ENCODE measurements at regions of chr1 and their contacts with region 1.

Region 1: DNA sequence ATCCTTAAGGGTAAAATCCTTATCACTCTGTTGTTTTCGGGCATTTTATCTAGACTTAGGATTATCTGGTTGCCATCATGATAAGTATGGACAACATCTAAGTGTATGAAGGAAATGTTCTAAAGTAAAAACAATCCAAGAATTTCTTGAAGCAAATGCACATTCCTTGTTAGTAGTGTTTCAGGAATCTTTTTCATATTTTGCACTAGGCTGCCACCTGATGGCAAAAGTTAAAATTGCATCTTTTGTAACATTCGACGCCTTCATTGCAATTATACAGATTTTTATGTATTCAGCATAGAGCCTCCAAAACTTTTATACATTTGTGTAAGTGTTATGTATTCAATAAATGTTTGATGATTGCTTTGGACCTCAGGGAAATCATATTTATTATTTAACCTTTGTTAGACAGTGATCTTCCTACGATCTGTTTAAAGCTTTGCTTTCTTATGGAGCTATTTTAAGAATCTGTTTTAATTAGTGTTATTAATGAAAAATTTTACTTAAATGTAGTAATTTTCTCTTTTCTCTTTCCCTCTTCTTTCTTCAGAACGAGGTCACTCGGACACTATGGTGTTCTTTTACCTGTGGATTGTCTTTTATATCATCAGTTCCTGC is 49.4 kb upstream of the KIAA1614 start:
- DNase-seq: peak; percentile 64
- ATAC-seq: no peak
- H3K4me3 ChIP-seq: no peak overlapping the region
- H3K4me3 Mint-ChIP-seq: no peak overlapping the region
- H3K27ac ChIP-seq: no peak overlapping the region
- H3K27ac Mint-ChIP-seq: no peak overlapping the region
- H3K4me1 ChIP-seq: no peaks in the 10 kb centered on the region
- H3K4me1 Mint-ChIP-seq: no peaks in the 10 kb centered on the region
- H3K27me3 ChIP-seq: no peaks in the 10 kb centered on the region
- H3K27me3 Mint-ChIP-seq: no peaks in the 10 kb centered on the region
- CTCF ChIP-seq: peak; percentile 90

Region 2: DNA sequence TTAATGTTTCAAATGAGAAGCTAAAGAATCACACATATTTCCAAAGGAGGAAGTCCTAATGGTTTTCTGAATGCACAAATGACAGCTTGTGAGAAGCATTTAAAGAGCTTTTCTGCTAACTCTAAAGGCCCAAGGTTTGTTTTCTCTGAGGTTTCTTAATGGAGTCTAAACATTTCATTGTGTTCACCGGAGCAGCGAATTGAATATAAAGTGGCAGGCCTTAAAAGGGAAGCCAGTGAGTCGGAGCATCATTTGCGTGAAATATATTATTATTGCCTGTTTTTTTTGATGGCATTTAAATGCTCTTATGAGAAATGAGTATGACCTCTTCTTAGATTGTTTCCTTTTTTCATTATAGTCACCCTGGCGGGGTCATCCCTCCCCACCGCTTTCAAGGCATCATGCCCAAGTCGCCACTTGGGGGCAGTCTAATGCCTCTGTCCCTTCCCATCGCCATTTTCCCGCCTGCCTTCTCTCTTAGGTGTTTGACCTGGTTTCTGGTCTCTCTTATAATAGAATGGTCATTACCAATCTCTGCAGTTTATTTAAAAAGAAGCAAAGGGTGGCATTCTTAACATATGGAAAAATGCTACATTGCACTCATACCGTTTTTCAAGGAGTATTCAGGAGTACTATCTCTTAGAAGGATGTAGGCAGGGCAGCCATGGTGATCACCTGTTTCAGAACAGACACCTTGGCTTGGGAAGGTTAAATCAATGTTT is 329.8 kb before region 1 on chr1:
- CTCF ChIA-PET with region 1: interaction called, 210 read pairs
- POLR2A ChIA-PET with region 1: no interaction called
- intact Hi-C with region 1: loop called (anchors 5 kb)
- DNase-seq: peak; percentile 68
- ATAC-seq: no peak
- H3K4me3 ChIP-seq: no peak overlapping the region
- H3K4me3 Mint-ChIP-seq: no peak overlapping the region
- H3K27ac ChIP-seq: no peak overlapping the region
- H3K27ac Mint-ChIP-seq: no peak overlapping the region
- H3K4me1 ChIP-seq: no peaks in the 10 kb centered on the region
- H3K4me1 Mint-ChIP-seq: no peaks in the 10 kb centered on the region
- H3K27me3 ChIP-seq: peaks cover 0 to 4% (median 0%) of the 10 kb centered on the region in 4 experiments
- H3K27me3 Mint-ChIP-seq: peaks cover 6% of the 10 kb centered on the region
- CTCF ChIP-seq: peak; percentile 77

Region 3: DNA sequence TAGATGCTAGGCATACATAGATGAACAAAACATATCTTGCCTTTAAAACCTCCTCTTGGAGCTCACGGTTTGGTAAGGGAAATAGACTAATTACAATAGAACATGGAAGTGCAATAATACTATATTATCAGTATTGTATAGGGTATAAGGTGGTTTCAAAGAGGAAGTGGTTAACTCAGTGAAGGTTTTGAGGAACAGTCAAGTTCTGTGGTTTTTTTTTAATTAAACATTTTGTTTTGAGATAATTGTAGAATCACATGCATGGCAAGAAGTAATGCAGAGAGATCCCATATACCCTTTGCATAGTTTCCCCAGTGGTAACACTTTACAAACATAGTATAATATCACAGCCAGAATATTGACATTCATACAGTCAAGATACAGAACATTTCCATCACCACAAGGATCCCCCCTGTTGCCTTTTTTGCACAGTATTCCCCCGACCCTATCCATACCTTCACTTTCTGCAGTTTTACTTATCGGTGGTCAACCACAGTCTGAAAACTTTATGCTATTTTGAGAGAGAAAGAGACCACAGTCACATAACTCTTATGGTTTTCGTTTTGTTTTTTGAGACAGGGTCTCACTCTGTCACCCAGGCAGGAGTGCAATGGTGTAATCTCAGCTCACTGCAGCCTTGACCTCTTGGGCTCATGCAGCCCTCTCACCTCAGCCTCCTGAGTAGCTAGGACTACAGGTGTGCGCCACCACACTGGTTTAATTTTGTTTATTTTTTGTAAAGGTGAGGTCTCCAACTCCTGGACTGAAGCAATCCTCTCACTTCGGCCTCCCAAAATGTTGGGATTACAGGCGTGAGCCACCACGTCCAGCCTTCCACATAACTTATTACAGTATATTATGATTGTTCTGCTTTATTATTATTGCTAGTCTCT is 11.0 kb before region 1 on chr1:
- CTCF ChIA-PET with region 1: interaction called, 20 read pairs
- POLR2A ChIA-PET with region 1: no interaction called
- intact Hi-C with region 1: no loop called
- DNase-seq: peak; percentile 13
- ATAC-seq: peak; percentile 56
- H3K4me3 ChIP-seq: no peak overlapping the region
- H3K4me3 Mint-ChIP-seq: peak overlapping the region; percentile 6
- H3K27ac ChIP-seq: no peak overlapping the region
- H3K27ac Mint-ChIP-seq: no peak overlapping the region
- H3K4me1 ChIP-seq: peaks cover 9 to 10% of the 10 kb centered on the region in 2 donors
- H3K4me1 Mint-ChIP-seq: peaks cover 20% of the 10 kb centered on the region
- H3K27me3 ChIP-seq: no peaks in the 10 kb centered on the region
- H3K27me3 Mint-ChIP-seq: no peaks in the 10 kb centered on the region
- CTCF ChIP-seq: no peak

Region 4: GRCh38 chr1:180881806-180882509 is 18.7 kb after region 1 on chr1:
- CTCF ChIA-PET with region 1: interaction called, 10 read pairs
- POLR2A ChIA-PET with region 1: no interaction called
- intact Hi-C with region 1: no loop called
- DNase-seq: peak; percentile 37
- ATAC-seq: no peak
- H3K4me3 ChIP-seq: no peak overlapping the region
- H3K4me3 Mint-ChIP-seq: no peak overlapping the region
- H3K27ac ChIP-seq: no peak overlapping the region
- H3K27ac Mint-ChIP-seq: no peak overlapping the region
- H3K4me1 ChIP-seq: no peaks in the 10 kb centered on the region
- H3K4me1 Mint-ChIP-seq: no peaks in the 10 kb centered on the region
- H3K27me3 ChIP-seq: no peaks in the 10 kb centered on the region
- H3K27me3 Mint-ChIP-seq: no peaks in the 10 kb centered on the region
- CTCF ChIP-seq: peak; percentile 47

Measured in B cell (primary cell).